Activated CD4-positive, alpha-beta T cell treated with anti-CD3 and anti-CD28 coated beads for 36 hours (primary cell): ENCODE measurements at regions of chr6 and their contacts with region 1.

Region 1: DNA sequence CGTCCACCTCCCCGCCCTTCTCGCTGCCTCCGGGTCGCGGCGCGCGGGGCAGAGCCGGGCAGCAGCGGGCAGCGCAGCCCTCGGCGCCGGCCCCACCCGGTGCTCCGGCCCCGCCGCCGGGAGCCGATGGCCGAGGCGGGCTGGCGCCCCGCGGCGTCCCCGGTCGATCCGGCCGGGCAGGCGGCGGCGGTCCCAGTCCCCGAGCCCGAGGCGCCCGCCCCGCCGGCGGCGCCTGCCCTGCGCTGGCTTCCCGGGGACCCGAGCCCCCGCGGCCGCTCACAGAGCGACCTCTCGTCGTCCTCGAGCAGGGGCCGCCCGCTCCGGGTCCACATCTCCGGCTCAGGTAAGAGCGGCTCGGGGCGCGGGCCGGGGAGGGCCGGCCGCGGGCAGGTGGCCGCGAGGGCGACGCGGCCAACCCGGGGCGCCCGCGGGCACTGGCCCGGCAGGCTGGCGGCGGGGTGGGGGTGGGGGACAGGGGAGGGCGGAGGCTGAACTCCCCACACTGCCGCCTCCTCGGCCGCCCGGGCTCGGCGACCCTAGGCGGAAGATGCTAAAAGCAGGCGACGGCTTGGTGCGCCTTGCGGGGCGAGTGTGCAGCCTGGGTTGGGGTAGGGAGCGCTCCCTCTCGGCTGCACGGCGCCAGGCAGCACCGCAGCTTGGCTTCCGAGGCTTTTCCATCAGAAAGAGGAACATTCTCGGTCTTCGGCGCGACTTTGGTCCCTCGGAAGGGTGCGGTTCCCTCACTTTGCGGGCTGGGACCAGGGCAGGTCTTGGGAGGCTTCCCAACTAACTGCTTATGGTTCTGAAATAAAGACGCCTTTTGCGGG is 25.6 kb upstream of the FUCA2 start:
- DNase-seq: peak; percentile 81
- ATAC-seq: peak; percentile 73
- H3K4me3 Mint-ChIP-seq: peak overlapping the region; percentile 80
- H3K27ac Mint-ChIP-seq: peak overlapping the region; percentile 84
- H3K4me1 Mint-ChIP-seq: peaks cover 39% of the 10 kb centered on the region
- H3K27me3 Mint-ChIP-seq: no peaks in the 10 kb centered on the region

Region 2: DNA sequence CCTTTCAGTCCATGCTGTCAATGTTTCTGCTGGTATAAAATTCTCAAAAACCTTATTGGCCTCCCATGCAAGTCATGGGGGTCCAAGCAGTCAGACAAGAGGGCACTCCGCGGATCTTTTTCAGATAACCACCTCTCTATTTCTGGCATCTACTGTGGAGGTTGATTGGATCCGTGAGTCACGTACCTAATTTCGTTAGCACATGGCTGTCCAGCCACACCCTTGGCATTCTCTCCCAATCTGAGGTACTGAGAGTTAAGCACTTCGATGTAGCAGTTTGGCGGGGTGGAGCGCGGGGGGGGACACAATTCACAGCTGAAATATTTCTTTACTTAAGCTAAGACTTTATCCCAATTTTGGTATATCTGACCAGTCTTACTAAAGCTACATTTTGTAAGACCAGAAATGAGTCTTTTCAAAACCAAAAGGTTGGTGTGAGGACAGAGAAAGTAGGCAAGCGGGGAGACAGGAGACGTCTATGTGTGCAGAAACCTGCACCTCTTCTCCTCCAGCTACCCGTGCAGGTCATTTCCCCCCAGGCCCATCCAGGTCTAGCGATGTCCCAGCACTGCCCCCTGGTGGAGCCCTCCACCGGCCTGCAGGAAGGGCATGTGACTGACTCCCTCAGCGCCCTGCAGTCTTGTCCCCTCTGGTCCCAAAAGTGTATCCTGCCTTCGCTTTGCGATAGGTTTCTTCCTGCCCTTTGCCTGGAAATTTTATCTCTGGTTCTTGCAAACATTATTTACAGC is 199.7 kb before region 1 on chr6:
- CTCF ChIA-PET with region 1: no interaction called
- POLR2A ChIA-PET with region 1: no interaction called
- intact Hi-C with region 1: no loop called
- DNase-seq: peak; percentile 74
- ATAC-seq: peak; percentile 63
- H3K4me3 Mint-ChIP-seq: no peak overlapping the region
- H3K27ac Mint-ChIP-seq: no peak overlapping the region
- H3K4me1 Mint-ChIP-seq: peaks cover 5% of the 10 kb centered on the region
- H3K27me3 Mint-ChIP-seq: no peaks in the 10 kb centered on the region

Region 3: GRCh38 chr6:143569040-143569439 is 32.0 kb after region 1 on chr6:
- CTCF ChIA-PET with region 1: interaction called, 3 read pairs
- POLR2A ChIA-PET with region 1: no interaction called
- intact Hi-C with region 1: loop called in 1 of 2 experiments (anchors 1 kb)
- DNase-seq: no peak
- ATAC-seq: no peak
- H3K4me3 Mint-ChIP-seq: no peak overlapping the region
- H3K27ac Mint-ChIP-seq: no peak overlapping the region
- H3K4me1 Mint-ChIP-seq: peaks cover 27% of the 10 kb centered on the region
- H3K27me3 Mint-ChIP-seq: no peaks in the 10 kb centered on the region